ENCODE measurements at regions of chr15 and their contacts with region 1.

Region 1: DNA sequence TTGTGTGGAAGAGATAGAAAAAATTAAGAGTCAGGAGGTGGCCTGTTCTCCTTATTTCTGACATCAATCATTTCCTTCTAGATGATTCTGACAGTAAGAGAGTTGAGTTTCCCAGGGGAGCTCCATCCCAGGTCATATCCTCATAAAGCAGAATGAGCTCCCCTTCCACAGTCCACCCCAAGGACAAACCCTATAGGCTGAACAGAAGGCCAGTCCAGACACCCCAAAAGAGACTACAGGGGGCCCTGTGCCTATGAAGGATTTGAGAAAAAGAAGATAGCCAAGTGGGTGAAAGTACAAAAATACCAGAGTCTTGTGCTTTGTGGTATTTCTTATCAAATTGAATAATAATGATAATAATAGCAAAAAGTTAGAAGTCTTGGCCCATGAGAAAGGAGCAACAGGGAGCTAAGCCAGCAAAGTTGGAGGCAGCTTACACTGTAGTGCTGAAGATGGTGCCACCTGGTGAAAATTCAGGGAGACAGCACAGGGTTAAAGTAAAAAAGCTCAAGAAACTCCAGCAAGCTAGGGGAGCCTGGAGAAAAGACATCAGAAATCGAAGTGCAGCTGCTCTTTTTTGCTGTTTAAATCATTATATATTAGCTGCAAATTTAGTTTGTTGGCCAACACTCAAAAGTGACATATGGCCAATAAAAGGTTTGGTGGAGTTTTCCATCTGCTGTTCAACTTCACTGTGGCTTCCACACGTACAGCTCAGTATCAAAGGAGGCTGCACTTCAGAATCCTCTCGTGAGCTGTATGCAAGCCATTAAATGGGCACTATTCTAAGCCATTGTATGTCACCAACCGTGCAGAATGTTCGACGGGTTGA is 35.8 kb upstream of the SLC24A5 start:
- DNase-seq: peak; percentile 14
- ATAC-seq: peak; percentile 97
- H3K4me3 Mint-ChIP-seq: no peak overlapping the region
- H3K27ac Mint-ChIP-seq: no peak overlapping the region
- H3K4me1 Mint-ChIP-seq: peaks cover 5% of the 10 kb centered on the region
- H3K27me3 Mint-ChIP-seq: no peaks in the 10 kb centered on the region; the same call in 1 of the 2 replicates
- CTCF ChIP-seq: peak; percentile 44; the same call in 1 of the 2 replicates

Region 2: DNA sequence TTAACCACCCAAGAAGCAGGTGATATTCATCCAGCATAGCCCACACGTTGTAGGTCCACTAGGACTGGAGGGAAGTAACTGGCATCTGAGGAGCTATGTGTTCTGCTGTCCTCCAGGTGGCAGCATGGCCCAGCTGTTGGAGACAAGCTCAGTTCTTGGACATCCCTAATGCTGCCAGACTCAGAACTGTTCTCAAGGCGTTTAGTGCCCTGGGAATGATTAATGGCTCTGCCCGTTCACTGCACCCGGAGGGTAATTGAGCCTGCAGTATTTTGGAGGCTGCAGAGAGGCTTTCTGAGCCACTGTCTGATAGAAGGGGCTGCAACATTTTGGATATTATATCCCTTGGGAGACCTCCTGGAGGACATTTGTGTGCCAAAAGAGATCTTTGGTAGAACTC is 888.9 kb before region 1 on chr15:
- CTCF ChIA-PET with region 1: interaction called, 17 read pairs
- POLR2A ChIA-PET with region 1: no interaction called
- DNase-seq: peak; percentile 83
- ATAC-seq: peak; percentile 94
- H3K4me3 Mint-ChIP-seq: peak overlapping the region; percentile 47
- H3K27ac Mint-ChIP-seq: no peak overlapping the region
- H3K4me1 Mint-ChIP-seq: peaks cover 46% of the 10 kb centered on the region
- H3K27me3 Mint-ChIP-seq: peaks cover 30% of the 10 kb centered on the region
- CTCF ChIP-seq: peak; percentile 61

Region 3: GRCh38 chr15:47908950-47909670 is 175.9 kb before region 1 on chr15:
- CTCF ChIA-PET with region 1: interaction called, 38 read pairs
- POLR2A ChIA-PET with region 1: no interaction called
- DNase-seq: no peak
- ATAC-seq: no peak
- H3K4me3 Mint-ChIP-seq: no peak overlapping the region
- H3K27ac Mint-ChIP-seq: no peak overlapping the region
- H3K4me1 Mint-ChIP-seq: no peaks in the 10 kb centered on the region
- H3K27me3 Mint-ChIP-seq: no peaks in the 10 kb centered on the region; the same call in 1 of the 2 replicates
- CTCF ChIP-seq: no peak

Region 4: DNA sequence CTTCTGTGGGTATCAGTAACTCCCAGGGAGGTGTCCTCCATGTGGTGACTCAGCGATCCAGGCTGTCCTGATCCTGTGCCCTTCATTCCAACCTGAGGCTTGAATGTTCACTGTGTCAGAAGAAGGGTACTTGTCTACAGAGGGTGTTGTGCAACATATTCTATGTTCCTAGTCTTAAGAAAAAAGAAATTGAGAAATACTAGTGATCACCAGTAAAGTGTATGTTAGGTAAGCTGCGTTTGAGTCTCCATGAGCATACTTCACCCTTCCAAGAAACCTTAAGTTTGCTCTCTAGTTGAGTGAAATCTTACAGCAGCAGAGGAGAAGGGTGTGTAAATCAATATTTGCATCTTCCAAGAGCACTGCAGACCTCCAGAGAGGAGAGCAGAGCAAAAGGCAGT is 86.4 kb before region 1 on chr15:
- CTCF ChIA-PET with region 1: interaction called, 14 read pairs
- POLR2A ChIA-PET with region 1: no interaction called
- DNase-seq: no peak
- ATAC-seq: no peak
- H3K4me3 Mint-ChIP-seq: no peak overlapping the region
- H3K27ac Mint-ChIP-seq: no peak overlapping the region
- H3K4me1 Mint-ChIP-seq: peaks cover 16% of the 10 kb centered on the region
- H3K27me3 Mint-ChIP-seq: no peaks in the 10 kb centered on the region; the same call in 1 of the 2 replicates
- CTCF ChIP-seq: no peak

Region 5: DNA sequence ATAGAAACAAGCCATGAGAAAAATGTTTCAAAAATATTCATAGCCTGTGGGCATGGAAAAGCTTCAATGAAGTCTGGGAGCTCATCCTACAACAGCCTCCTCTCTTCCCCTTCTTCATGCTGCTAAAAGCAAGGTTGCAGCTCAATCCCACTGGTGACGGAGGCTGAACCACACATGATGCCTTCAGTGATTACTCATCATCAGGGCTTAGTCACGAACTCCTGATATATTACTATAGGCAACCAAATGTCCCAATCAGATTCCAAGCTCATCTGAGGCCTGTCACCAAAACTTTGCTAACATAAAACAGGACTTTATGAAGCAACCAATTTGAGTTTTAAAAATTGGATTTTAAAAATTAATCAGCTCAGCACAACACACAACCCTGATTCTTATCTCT is 11.8 kb after region 1 on chr15:
- CTCF ChIA-PET with region 1: interaction called, 10 read pairs
- POLR2A ChIA-PET with region 1: no interaction called
- DNase-seq: no peak
- ATAC-seq: no peak
- H3K4me3 Mint-ChIP-seq: no peak overlapping the region
- H3K27ac Mint-ChIP-seq: no peak overlapping the region
- H3K4me1 Mint-ChIP-seq: no peaks in the 10 kb centered on the region
- H3K27me3 Mint-ChIP-seq: no peaks in the 10 kb centered on the region
- CTCF ChIP-seq: no peak

Region 6: GRCh38 chr15:48285329-48286214 is 200.6 kb after region 1 on chr15:
- CTCF ChIA-PET with region 1: interaction called, 10 read pairs
- POLR2A ChIA-PET with region 1: no interaction called
- DNase-seq: peak; percentile 33
- ATAC-seq: peak; percentile 85
- H3K4me3 Mint-ChIP-seq: no peak overlapping the region
- H3K27ac Mint-ChIP-seq: no peak overlapping the region; the same call in 1 of the 2 replicates
- H3K4me1 Mint-ChIP-seq: peaks cover 56% of the 10 kb centered on the region
- H3K27me3 Mint-ChIP-seq: no peaks in the 10 kb centered on the region
- CTCF ChIP-seq: peak; percentile 56

Region 7: DNA sequence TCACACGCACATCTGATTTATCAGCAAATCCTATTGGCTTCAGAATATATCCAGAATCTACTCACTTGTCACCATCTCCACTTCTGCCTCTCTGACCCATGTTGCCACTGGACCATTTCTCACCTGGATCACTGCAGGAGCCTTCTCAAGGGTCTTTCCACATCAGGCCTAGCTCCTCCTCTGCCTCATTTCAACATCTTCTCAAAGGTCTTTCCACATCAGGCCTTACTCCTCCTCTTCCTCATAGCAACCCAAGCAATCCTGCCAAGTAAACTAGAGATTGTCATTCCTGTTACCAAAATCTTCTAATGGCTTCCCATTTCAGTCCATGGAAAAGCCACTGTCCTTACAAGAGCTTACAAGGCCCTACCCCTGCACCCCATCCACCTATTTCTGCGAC is 228.2 kb after region 1 on chr15:
- CTCF ChIA-PET with region 1: no interaction called
- POLR2A ChIA-PET with region 1: no interaction called
- DNase-seq: no peak
- ATAC-seq: no peak
- H3K4me3 Mint-ChIP-seq: no peak overlapping the region
- H3K27ac Mint-ChIP-seq: no peak overlapping the region
- H3K4me1 Mint-ChIP-seq: peaks cover 34% of the 10 kb centered on the region
- H3K27me3 Mint-ChIP-seq: no peaks in the 10 kb centered on the region; the same call in 1 of the 2 replicates
- CTCF ChIP-seq: no peak